A549 (cell line): ENCODE measurements at regions of chr6 and their contacts with region 1.

Region 1: DNA sequence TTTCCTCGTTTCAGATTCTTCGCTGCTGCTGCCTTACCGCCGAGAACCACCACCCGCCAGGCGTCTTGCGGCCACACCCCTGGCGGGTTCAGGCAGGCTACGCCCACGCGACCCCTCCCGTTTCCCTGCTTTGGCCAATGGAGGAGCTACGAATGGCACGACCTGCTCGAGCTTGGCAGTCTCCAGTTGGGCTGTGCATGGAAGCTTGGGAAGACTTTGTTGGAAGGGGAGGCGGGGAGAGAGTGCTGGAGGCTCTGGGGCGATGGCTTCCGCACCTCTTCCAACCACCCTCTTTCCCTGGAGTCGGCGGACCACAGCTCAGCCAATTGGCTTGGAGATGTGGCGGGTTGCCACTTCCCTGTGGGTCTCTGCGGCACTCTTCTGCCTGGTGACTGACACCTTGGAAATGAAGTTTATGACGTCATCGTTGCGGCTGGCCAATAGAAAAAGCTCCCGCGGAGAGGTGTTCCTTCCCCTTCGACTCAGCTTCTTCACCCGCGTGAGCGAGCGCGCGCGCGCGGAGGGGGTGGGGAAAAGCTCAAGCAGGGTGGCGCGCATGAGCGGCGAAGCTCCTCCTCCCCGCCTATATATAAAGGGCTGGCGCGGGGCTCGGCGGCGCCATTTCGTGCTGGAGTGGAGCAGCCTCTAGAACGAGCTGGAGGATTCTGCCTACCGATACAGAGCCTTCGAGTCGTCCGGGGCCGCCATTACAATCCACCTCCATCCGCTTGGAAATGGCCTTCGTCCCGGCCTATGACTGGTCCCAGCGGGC is 3.4 kb downstream of the BRD2 start:
- DNase-seq: peak; percentile 79 to 99
- ATAC-seq: peak; percentile 49 to 70
- H3K4me3 ChIP-seq: peak overlapping the region; percentile 72
- H3K27ac ChIP-seq: peak overlapping the region; percentile 99 to 100
- H3K4me1 ChIP-seq: peaks cover 22% of the 10 kb centered on the region
- CTCF ChIP-seq: no peak
- EP300 ChIP-seq: no peak
- POLR2A ChIP-seq: peak; percentile 99
- RAD21 ChIP-seq: no peak

Region 2: DNA sequence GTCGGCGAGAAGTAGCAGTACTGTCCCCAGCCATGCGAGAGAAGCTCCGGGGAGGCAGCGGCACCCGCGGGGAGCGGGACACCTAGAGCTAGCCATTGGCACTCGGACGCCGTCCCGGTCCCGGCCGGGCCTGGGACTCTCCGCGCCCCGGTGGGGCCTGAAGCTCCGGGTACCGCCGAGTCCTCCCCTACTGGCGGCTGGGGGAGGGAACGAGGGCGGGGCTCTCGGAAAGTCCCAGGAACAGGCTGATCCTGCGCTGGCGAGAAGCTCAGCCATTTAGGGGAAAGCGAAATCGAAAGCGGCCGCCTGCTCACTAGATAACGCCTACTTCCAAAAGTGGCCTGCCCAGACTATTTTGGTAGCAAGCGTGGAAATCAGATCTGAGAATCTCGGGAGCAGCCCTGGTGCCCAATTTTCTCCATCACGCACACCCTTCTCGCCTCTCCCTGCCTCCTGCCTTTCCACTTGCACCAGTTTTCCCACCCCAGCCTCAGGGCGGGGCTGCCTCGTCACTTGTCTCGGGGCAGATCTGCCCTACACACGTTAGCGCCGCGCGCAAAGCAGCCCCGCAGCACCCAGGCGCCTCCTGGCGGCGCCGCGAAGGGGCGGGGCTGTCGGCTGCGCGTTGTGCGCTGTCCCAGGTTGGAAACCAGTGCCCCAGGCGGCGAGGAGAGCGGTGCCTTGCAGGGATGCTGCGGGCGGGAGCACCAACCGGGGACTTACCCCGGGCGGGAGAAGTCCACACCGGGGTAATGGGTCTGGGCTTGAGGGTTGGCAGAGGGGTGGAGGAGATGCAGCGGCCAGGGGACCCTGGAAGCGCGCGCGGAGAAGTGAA is 118.0 kb before region 1 on chr6 and contains the starts of genes PSMB9 and TAP1:
- CTCF ChIA-PET with region 1: interaction called, 3 read pairs
- POLR2A ChIA-PET with region 1: interaction called, 11 read pairs
- DNase-seq: peak; percentile 85 to 90
- ATAC-seq: peak; percentile 92 to 94
- H3K4me3 ChIP-seq: peak within 1 kb of the TSS; percentile 61
- H3K27ac ChIP-seq: peak within 1 kb of the TSS; percentile 95 to 96
- H3K4me1 ChIP-seq: peaks cover 9% of the 10 kb centered on the region; the same call in 2 of the 3 replicates
- CTCF ChIP-seq: peak; percentile 62
- EP300 ChIP-seq: no peak
- POLR2A ChIP-seq: peak; percentile 47
- RAD21 ChIP-seq: peak; percentile 33 to 51; a peak in 4 of 5 replicates
- polyA plus RNA-seq, gene PSMB9: 11.7 and 12.5 TPM in 2 replicates
- polyA plus RNA-seq, gene TAP1: 21.2 and 28.2 TPM in 2 replicates

Region 3: DNA sequence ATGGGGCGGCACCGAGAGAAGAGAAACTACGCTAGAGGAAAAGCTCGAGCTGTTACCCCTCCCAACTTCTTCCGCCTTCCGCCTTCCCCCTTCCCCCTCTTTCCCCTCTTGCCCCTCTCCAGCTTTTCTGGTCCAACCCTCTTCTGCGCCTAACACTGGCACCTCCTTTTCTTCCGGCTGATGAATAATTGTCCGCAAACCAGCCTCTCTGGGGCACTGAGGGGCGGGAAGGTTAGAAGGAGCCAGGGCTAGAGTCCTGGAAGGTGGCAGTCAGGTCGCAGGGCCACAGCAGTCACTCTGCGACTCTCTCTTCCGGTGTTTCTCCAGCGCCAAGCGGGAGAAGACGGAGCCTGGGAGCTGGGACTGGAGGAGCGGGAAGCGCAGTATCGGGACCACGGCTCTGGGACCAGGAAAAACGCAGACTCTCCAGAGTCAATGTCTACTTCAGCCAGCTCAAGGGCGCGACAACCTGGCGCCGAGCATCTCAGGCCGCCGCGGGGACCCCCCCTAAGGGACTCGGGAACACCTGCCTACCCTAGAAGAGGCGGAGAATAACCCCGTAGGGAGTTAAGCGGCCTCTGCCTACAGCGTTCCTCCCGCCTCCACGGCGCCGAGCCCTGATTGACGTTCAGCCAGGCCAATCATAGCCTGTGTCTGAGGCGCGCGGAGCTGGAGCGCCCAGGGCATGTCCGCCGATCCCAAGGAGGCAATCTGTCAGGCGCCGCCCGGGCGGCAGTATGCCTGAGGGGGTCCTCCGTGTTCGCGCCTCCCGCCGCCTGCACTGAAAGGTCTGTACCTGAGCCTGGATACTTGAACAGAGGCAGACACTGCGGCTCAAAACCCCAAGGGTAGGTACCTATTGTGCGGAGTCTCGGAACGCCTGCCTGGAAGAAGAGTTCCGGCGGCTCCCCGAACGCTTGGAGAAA is 77.4 kb before region 1 on chr6:
- CTCF ChIA-PET with region 1: interaction called, 7 read pairs
- POLR2A ChIA-PET with region 1: interaction called, 47 read pairs
- DNase-seq: peak; percentile 91 to 95
- ATAC-seq: peak; percentile 99
- H3K4me3 ChIP-seq: peak overlapping the region; percentile 70
- H3K27ac ChIP-seq: peak overlapping the region; percentile 96 to 97
- H3K4me1 ChIP-seq: peaks cover 15% of the 10 kb centered on the region
- CTCF ChIP-seq: no peak
- EP300 ChIP-seq: no peak
- POLR2A ChIP-seq: peak; percentile 70
- RAD21 ChIP-seq: no peak; a peak in 1 of 5 replicates

Region 4: DNA sequence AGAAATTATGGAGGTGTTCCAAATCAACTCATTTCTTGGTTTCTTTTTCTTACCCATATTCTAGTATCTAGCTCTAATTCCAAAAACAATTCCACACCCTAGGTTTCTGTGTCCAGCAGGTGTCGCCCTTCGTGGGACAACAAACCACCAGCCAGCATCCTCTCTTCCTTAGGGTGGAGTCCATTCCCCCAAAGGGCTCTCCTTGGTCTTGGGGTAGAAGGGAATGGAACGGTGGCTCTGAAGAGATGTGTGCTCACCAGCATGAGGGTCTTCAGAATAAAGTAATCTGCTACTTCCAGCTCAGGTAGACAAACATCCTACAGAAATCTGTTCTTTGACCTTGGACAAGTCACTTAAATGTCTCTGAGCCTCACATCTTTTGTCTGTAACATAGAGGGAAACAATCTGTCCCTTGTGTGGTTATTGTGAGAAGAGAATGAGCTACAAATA is 38.1 kb before region 1 on chr6:
- CTCF ChIA-PET with region 1: interaction called, 22 read pairs
- POLR2A ChIA-PET with region 1: interaction called, 7 read pairs
- DNase-seq: peak; percentile 61 to 65
- ATAC-seq: peak; percentile 66 to 78; a peak in 4 of 6 replicates
- H3K4me3 ChIP-seq: no peak overlapping the region
- H3K27ac ChIP-seq: no peak overlapping the region
- H3K4me1 ChIP-seq: no peaks in the 10 kb centered on the region
- CTCF ChIP-seq: peak; percentile 73
- EP300 ChIP-seq: no peak
- POLR2A ChIP-seq: no peak
- RAD21 ChIP-seq: peak; percentile 49 to 58; a peak in 4 of 5 replicates

Region 5: GRCh38 chr6:32947552-32948465 is 24.0 kb before region 1 on chr6:
- CTCF ChIA-PET with region 1: interaction called, 35 read pairs
- POLR2A ChIA-PET with region 1: interaction called, 29 read pairs
- DNase-seq: peak in 1 of 2 experiments; percentile 75
- ATAC-seq: peak; percentile 92 to 95
- H3K4me3 ChIP-seq: no peak overlapping the region
- H3K27ac ChIP-seq: no peak overlapping the region
- H3K4me1 ChIP-seq: peaks cover 4% of the 10 kb centered on the region; the same call in 1 of the 3 replicates
- CTCF ChIP-seq: peak; percentile 78
- EP300 ChIP-seq: no peak
- POLR2A ChIP-seq: no peak
- RAD21 ChIP-seq: peak; percentile 91 to 94

Region 6: GRCh38 chr6:32952817-32953739 is 18.7 kb before region 1 on chr6 and contains the start of gene HLA-DMA:
- CTCF ChIA-PET with region 1: interaction called, 35 read pairs
- POLR2A ChIA-PET with region 1: interaction called, 29 read pairs
- DNase-seq: peak; percentile 49 to 93
- ATAC-seq: peak; percentile 88 to 99
- H3K4me3 ChIP-seq: no peak within 1 kb of the TSS
- H3K27ac ChIP-seq: no peak within 1 kb of the TSS
- H3K4me1 ChIP-seq: peaks cover 5% of the 10 kb centered on the region; the same call in 1 of the 3 replicates
- CTCF ChIP-seq: peak; percentile 50
- EP300 ChIP-seq: no peak
- POLR2A ChIP-seq: no peak
- RAD21 ChIP-seq: peak; percentile 24 to 28; a peak in 2 of 5 replicates
- polyA plus RNA-seq, gene HLA-DMA: 5.6 and 7.0 TPM in 2 replicates

Region 7: DNA sequence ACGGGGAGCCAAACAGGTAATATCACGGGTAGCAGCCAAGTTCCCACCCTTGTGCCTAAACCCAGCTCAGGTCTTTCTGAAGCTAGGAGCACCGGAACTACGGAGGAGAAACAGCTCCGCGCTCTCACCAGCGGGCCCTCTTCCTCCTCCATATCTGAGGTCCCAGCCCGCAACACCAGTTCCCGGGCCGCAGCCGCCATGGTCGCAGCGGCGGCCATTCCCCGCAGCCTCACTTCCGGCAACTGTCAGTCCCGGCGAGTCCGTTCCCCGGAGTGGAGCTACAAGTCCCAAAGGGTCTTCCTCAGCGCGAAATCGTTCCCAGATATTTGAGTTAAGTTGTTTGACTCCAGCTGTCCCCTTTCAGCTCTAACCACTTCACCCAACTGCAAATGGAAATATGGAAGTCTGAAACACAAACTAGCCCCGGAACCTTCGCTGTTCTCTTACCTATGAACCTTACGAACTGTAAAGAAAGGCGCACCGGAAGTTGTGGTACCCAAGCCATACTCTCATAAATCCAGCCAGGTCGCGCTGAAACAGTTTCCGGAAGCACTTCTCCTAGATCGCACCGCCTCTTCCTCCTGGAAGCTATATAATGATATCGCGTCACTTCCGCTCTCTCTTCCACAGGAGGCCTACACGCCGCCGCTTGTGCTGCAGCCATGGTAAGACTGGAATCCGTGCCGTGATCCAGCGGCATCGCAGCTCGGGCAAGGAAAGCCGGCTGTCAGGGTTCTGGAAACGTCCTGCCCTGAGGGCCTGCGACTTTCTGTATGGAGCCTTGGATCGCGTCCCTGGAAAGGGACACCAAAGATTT is 299.9 kb after region 1 on chr6 and contains the starts of genes RPS18 and VPS52:
- CTCF ChIA-PET with region 1: no interaction called
- POLR2A ChIA-PET with region 1: interaction called, 13 read pairs
- DNase-seq: peak; percentile 76 to 99
- ATAC-seq: peak; percentile 89 to 92
- H3K4me3 ChIP-seq: peak within 1 kb of the TSS; percentile 87
- H3K27ac ChIP-seq: peak within 1 kb of the TSS; percentile 91 to 97
- H3K4me1 ChIP-seq: peaks cover 39% of the 10 kb centered on the region
- CTCF ChIP-seq: no peak
- EP300 ChIP-seq: no peak
- POLR2A ChIP-seq: peak; percentile 98
- RAD21 ChIP-seq: no peak
- polyA plus RNA-seq, gene RPS18: 3,426 and 3,692 TPM in 2 replicates
- polyA plus RNA-seq, gene VPS52: 38.9 and 44.3 TPM in 2 replicates